ENCODE measurements at regions of chr1 and their contacts with region 1.

Region 1: GRCh38 chr1:1763657-1764616 is 14.3 kb downstream of the NADK start:
- DNase-seq: peak in 2 of 4 donors; percentile 88 to 96
- ATAC-seq: peak; percentile 94
- H3K4me3 ChIP-seq: peak overlapping the region in 1 of 2 donors; percentile 11
- H3K27ac ChIP-seq: peak overlapping the region in 1 of 2 donors; percentile 74
- H3K4me1 ChIP-seq: peaks cover 0 to 68% of the 10 kb centered on the region in 2 donors
- H3K27me3 ChIP-seq: no peaks in the 10 kb centered on the region
- CTCF ChIP-seq: peak in 1 of 2 donors; percentile 14

Region 2: GRCh38 chr1:1630271-1630964 is 133.5 kb before region 1 on chr1:
- intact Hi-C with region 1: no loop called
- DNase-seq: peak; percentile 81 to 93 (median 84)
- ATAC-seq: peak; percentile 33
- H3K4me3 ChIP-seq: peak overlapping the region; percentile 11 to 24
- H3K27ac ChIP-seq: peak overlapping the region; percentile 61 to 86
- H3K4me1 ChIP-seq: peaks cover 3 to 24% of the 10 kb centered on the region in 2 donors
- H3K27me3 ChIP-seq: peaks cover 9 to 40% of the 10 kb centered on the region in 2 donors
- CTCF ChIP-seq: no peak

Region 3: DNA sequence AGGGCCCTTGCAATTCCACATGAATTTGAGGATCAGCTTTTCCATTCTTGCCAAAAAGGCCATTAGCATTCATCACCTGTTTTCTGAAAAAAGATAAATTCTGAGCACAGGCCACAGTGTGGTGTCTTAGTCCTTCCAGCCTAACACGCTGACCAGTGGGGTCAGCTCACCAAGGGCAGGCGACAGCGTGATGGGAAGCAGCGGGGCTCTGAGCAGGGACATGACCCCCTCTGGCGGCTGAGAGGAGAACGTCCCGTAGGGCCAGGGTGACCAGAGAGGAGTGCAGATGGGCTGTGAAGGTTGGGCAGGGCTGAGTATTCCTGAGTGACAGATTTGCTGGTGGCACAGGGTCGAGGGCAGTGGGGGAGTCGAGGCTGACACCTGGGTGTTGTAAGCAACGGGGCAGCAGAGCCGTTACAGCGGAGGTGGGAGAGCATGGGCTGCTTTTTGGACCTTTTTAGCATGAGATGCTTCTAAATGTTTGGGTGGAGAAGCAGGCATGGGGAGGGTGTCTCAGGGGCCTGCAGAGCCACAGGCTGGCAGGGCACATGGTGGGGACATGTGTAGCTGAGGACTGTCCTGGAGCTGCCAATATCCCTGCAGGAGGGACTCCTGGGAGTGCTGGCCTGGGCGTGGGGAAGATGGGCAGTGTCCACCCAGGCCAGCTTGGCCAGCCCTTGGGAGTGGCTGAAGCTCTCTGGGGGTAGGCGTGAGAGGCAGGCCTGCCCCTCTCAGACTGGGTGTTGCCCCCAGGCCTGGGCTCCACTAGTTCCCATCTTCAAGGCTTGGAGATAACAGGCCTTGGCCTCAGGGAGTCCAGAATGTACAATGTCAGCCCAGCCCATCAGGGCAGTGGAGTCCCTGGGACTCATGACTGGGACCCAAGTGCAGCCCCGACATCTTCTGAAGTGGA is 142.5 kb after region 1 on chr1:
- intact Hi-C with region 1: loop called in 1 of 2 experiments (anchors 10 kb)
- DNase-seq: peak; percentile 74 to 95 (median 88)
- ATAC-seq: peak; percentile 69
- H3K4me3 ChIP-seq: no peak overlapping the region
- H3K27ac ChIP-seq: no peak overlapping the region
- H3K4me1 ChIP-seq: peaks cover 5 to 25% of the 10 kb centered on the region in 2 donors
- H3K27me3 ChIP-seq: no peaks in the 10 kb centered on the region
- CTCF ChIP-seq: peak; percentile 75 to 93